ENCODE measurements at regions of chr7 and their contacts with region 1.

Region 1: DNA sequence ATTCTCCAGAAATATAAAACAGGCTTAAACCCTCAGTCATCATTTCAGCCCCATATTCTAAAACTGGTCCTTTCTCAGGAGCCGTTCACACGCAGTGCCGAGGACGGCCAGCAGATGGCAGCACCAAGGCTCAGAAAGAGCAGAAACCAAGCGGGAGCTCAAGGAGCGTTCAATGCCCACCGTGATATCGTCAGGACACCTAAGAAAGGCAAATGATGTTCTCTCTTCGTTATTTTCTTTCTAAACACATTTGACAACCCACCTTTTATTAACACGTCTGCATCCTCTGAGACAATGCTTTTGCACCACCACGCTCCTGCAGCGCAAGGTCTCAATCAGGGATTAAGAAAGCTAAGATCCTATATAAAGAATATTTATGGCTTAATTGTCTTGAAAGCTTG is 45.7 kb upstream of the RBM33 start:
- DNase-seq: peak; percentile 54 to 83 (median 72)
- H3K4me3 ChIP-seq: no peak overlapping the region
- H3K4me3 Mint-ChIP-seq: no peak overlapping the region
- H3K27ac ChIP-seq: no peak overlapping the region
- H3K27ac Mint-ChIP-seq: no peak overlapping the region
- H3K4me1 ChIP-seq: no peaks in the 10 kb centered on the region
- H3K4me1 Mint-ChIP-seq: peaks cover 3 to 7% (median 4%) of the 10 kb centered on the region in 3 donors
- H3K27me3 ChIP-seq: peaks cover 4% of the 10 kb centered on the region
- H3K27me3 Mint-ChIP-seq: peaks cover 23 to 65% of the 10 kb centered on the region in 2 donors

Region 2: GRCh38 chr7:155333346-155334234 is 265.2 kb before region 1 on chr7:
- CTCF ChIA-PET with region 1: no interaction called
- POLR2A ChIA-PET with region 1: no interaction called
- DNase-seq: no peak
- H3K4me3 ChIP-seq: no peak overlapping the region
- H3K4me3 Mint-ChIP-seq: no peak overlapping the region
- H3K27ac ChIP-seq: no peak overlapping the region
- H3K27ac Mint-ChIP-seq: no peak overlapping the region
- H3K4me1 ChIP-seq: peaks cover 5% of the 10 kb centered on the region
- H3K4me1 Mint-ChIP-seq: peaks cover under 1 to 10% (median 3%) of the 10 kb centered on the region in 3 donors
- H3K27me3 ChIP-seq: peaks cover 12% of the 10 kb centered on the region
- H3K27me3 Mint-ChIP-seq: peaks cover 5 to 8% of the 10 kb centered on the region in 2 donors

Region 3: DNA sequence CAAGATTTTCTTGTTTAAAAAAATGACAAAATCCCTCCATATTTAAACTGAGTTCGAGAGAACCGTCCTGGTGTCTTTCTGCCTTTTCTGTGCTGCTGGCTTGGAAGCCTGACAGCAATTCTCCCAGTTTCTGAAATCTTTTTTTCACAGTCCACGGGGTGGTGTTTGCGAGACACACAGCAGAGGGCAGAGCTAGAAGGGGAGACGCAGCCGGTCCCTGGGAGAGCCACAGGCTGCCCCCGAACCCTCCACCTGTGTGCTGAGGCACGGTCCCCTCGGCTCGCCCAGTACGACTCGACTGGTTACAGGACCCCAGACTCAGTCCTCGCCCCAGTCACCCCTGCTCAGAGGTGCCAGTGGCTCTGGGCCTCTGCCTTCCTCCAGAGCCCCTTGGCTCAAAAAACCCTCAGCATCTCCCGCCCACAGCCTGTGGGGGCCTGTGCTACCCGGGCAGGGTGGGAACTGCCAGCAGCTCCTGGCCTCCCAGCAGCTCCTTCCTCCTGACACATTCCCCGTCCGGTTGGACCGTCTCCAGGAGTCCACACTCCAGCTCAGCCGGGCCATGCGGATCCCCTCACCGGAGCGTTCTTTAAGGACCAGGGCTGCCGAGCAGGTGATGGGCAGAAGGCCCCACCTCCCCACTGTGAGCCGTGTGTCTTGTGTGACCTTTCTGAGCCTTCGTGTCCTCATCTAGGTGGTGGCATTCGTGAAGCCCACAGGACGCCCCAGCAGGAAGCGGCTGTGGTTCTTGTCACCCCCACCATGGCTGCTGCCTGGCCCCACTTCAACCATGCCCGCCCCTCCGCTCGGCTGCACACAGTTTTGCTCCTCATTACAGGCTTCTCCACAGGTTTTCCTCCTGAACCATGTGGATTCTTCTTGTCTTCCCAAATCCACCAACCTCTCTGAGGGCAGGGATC is 193.2 kb before region 1 on chr7:
- CTCF ChIA-PET with region 1: no interaction called
- POLR2A ChIA-PET with region 1: no interaction called
- DNase-seq: no peak
- H3K4me3 ChIP-seq: no peak overlapping the region
- H3K4me3 Mint-ChIP-seq: peak overlapping the region in 3 of 7 donors; percentile 4 to 75 (median 18)
- H3K27ac ChIP-seq: no peak overlapping the region
- H3K27ac Mint-ChIP-seq: peak overlapping the region in 2 of 8 donors; percentile 7 to 62
- H3K4me1 ChIP-seq: no peaks in the 10 kb centered on the region
- H3K4me1 Mint-ChIP-seq: peaks cover 7 to 13% (median 10%) of the 10 kb centered on the region in 3 donors
- H3K27me3 ChIP-seq: peaks cover 5% of the 10 kb centered on the region
- H3K27me3 Mint-ChIP-seq: peaks cover 38 to 49% of the 10 kb centered on the region in 2 donors

Region 4: DNA sequence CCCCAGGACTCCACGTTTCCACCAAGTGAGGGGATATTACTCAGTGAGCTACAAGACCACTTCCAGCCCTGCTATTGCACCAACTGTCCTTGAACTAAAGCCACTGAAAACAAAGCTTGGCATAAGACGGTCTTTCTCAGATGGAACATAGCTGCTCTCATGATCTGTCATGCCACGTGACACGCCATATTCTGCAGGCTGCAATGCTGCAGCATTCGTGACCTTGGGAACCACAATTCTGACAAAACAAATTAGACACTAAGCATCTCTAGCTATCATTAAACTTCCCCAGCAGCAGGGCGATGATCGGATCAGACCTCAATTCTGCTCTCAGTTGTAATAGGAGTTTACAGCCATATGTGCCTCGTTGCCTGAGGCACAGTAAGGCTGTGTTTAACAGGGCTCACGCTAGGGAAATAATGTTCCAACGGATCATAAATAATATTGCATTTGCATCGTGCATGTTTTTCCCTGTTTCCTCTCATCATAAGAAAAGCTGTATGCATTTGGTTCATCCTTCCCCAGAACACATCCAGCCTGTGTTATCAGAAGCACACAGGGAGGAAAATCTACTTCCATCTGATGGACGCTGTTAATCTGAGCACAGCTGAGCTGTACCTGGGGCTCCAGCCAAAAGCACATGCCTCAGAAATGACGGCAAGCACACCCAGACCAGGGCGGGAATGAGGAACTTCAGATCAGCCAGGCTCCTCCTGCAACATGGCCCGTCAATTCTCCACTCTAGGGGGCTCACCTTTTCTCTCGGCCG is 13.9 kb before region 1 on chr7:
- CTCF ChIA-PET with region 1: interaction called, 16 read pairs
- POLR2A ChIA-PET with region 1: no interaction called
- DNase-seq: no peak
- H3K4me3 ChIP-seq: no peak overlapping the region
- H3K4me3 Mint-ChIP-seq: no peak overlapping the region
- H3K27ac ChIP-seq: no peak overlapping the region
- H3K27ac Mint-ChIP-seq: no peak overlapping the region
- H3K4me1 ChIP-seq: no peaks in the 10 kb centered on the region
- H3K4me1 Mint-ChIP-seq: no peaks in the 10 kb centered on the region
- H3K27me3 ChIP-seq: peaks cover 3% of the 10 kb centered on the region
- H3K27me3 Mint-ChIP-seq: peaks cover 11 to 43% of the 10 kb centered on the region in 2 donors

Region 5: DNA sequence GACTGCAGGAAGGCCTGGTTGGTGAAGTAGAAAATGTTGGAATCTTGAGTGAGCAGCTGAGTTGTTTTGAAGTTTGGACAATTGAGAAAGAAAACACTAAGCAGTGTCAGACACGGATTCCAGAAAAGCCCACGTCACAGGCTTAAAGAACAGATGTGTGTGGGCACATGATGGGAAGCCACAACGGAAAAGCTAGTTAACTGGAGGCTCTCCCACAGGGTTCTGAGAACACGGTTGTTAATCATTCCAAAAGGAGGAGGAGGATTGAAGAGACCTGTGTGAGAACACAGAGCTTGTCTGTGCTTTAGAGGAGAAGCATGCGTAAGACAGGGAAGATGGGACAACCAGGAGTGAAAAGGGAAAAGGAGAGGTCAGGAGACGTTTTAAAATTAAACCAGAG is 170.9 kb after region 1 on chr7:
- CTCF ChIA-PET with region 1: interaction called, 88 read pairs
- POLR2A ChIA-PET with region 1: no interaction called
- DNase-seq: no peak
- H3K4me3 ChIP-seq: no peak overlapping the region
- H3K4me3 Mint-ChIP-seq: no peak overlapping the region
- H3K27ac ChIP-seq: no peak overlapping the region
- H3K27ac Mint-ChIP-seq: peak overlapping the region in 3 of 8 donors; percentile 27 to 93 (median 64)
- H3K4me1 ChIP-seq: peaks cover 3% of the 10 kb centered on the region
- H3K4me1 Mint-ChIP-seq: peaks cover 9 to 14% (median 9%) of the 10 kb centered on the region in 3 donors
- H3K27me3 ChIP-seq: no peaks in the 10 kb centered on the region
- H3K27me3 Mint-ChIP-seq: no peaks in the 10 kb centered on the region

Measured in CD8-positive, alpha-beta memory T cell (primary cell).